Dorsolateral prefrontal cortex (tissue), 120 donors: ENCODE measurements at regions of chr11 and their contacts with region 1.

Region 1: DNA sequence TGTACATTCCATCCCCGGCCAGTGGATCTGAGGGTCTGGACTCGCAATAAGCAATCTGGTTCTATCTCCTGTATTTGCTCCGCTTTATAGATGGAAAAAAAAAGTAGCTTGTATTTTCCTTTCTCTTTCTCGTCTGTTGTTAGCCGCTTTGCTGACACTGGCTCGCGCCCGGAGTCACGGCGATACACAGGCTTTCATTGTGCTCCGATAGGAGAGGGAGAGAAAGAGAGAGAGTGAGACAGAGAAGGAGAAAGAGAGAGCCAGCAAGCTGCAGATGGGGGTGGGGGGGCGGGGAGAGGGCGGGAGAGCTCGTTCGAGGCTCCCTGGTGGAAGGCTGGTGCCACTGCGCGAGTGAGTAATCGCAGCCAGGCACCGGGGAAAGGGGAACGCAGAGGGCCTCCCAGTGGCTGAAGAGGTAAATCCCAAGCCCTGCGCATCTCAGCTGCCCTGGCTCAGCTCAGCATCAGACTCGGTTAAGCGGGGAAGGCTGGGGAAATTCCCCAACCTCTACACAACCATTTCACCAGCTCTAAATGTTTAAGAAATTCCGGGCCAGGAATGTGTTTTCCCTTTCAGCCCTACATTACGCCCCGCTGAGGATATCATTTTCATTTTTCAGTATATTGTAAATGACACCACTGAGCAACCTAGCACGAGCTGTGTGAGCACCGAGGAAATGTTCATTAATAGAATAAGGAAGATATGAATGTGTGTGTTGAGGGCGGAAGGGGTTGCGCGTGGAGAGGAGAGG is at the start of gene MAML2:
- DNase-seq: peak; percentile 83 to 95 (median 94)
- H3K4me3 ChIP-seq: peak within 1 kb of the TSS; percentile 37 to 91 (median 75)
- H3K27ac ChIP-seq: peak within 1 kb of the TSS in 57 of 59 donors; percentile 13 to 94 (median 85)
- H3K27me3 ChIP-seq: no peaks in the 10 kb centered on the region
- CTCF ChIP-seq: peak; percentile 85 to 99 (median 98)
- total RNA-seq, gene MAML2: 4.9 to 21.8 (median 10.2) TPM

Region 2: DNA sequence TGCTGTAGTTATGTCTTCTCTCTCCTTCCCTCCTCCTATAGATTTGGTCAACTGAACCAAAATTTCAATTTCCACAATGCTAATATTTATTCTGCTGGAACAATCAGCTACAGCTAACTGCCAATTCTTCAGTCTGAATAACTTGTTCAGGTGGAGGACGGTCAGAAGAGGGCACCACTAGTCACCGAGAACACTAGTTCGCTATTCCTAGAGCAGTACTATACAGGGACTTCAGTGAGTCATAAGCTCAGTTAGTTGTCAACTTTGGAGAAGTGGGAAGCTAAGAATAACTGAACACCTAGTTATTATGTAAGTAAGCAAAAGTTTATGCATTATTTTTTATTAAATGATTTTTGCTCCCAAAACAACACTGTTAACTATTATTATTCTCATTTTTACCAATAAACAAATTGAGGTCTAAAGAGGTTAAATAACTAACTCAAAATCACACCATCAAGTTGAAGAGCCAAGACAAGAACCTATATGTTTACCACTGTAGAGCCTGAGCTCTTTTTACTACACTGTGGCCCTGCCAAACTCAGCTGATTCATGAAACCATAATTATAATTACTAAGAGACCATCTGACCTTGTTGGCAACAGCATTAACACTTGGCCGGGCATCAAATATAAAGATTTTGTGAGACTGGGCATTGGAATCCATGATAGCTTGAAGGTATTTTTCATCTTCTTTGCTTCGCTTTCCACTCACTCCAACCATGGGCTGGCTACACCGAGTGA is 493.9 kb before region 1 on chr11:
- intact Hi-C with region 1: loop called in 1 of 2 experiments (anchors 5 kb)
- DNase-seq: peak in 6 of 10 donors; percentile 13 to 72 (median 46)
- H3K4me3 ChIP-seq: no peak overlapping the region
- H3K27ac ChIP-seq: peak overlapping the region in 39 of 59 donors; percentile 1 to 73 (median 43)
- H3K27me3 ChIP-seq: no peaks in the 10 kb centered on the region
- CTCF ChIP-seq: peak in 54 of 56 donors; percentile 43 to 84 (median 60)

Region 3: GRCh38 chr11:96012086-96012824 is 330.9 kb before region 1 on chr11:
- intact Hi-C with region 1: loop called (anchors 2 to 5 kb)
- DNase-seq: peak in 9 of 10 donors; percentile 39 to 76 (median 55)
- H3K4me3 ChIP-seq: peak overlapping the region in 45 of 59 donors; percentile 4 to 48 (median 29)
- H3K27ac ChIP-seq: peak overlapping the region in 57 of 59 donors; percentile 4 to 86 (median 63)
- H3K27me3 ChIP-seq: no peaks in the 10 kb centered on the region
- CTCF ChIP-seq: peak in 55 of 56 donors; percentile 40 to 85 (median 66)

Region 4: DNA sequence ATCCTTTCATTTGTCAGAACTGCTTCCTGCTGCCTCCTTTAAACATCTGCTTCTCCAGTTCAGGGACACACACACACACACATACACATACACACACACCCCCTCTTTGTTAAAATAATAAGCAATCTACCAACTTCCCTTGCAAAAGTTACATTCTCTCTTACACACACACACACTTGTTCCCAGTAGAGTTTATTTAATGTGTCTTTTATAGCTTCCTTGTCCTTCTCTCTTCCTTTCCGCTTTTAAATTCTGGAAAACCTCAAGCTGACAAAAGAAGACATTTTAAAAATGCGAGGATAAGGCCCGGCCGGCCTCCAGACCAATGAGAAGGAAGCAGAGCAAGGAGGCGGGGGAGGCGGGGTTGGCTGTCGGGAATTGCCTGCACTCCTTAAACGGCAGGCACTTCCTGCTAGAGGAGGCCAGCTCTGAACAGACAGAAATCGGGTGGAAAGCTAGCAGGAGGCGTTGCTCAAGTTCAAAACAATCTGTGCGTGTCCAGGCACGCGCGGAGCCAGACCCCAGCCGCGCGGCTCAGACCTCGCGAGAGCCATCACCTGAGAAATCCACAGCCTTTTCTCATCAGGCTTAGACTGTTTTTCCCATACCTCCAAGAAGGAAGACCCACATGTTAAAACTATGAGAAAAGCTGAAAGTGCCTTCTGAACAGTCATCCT is 100.0 kb before region 1 on chr11:
- intact Hi-C with region 1: loop called (anchors 5 kb)
- DNase-seq: peak; percentile 62 to 92 (median 86)
- H3K4me3 ChIP-seq: peak overlapping the region; percentile 32 to 76 (median 57)
- H3K27ac ChIP-seq: peak overlapping the region in 56 of 59 donors; percentile 30 to 91 (median 78)
- H3K27me3 ChIP-seq: no peaks in the 10 kb centered on the region
- CTCF ChIP-seq: peak in 7 of 56 donors; percentile 8 to 22 (median 14)

Region 5: DNA sequence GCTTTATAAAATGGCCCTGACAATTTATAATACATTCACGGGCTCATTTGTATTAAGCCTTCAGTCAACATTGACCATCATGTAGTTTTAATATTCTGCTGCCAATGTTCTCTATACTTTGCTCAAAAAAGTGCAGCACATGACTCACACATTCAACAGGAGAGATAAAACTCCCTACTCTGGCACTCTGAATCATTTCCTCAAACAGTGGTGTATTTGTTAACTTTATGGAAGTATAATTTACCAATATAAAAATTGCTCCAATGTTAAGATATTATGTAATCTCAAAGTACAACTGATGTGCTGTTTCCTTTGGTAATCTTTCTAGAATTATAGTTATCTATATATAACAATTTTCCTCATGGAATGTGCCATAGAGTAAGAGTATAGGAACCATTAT is 40.1 kb before region 1 on chr11:
- intact Hi-C with region 1: loop called in 1 of 2 experiments (anchors 5 kb)
- DNase-seq: no peak
- H3K4me3 ChIP-seq: no peak overlapping the region
- H3K27ac ChIP-seq: peak overlapping the region in 3 of 59 donors; percentile 3 to 19 (median 12)
- H3K27me3 ChIP-seq: no peaks in the 10 kb centered on the region
- CTCF ChIP-seq: no peak